ENCODE measurements at regions of chr1 and their contacts with region 1.

Region 1: GRCh38 chr1:24391882-24392603 is 21.5 kb downstream of the STPG1 start:
- DNase-seq: peak in 1 of 2 donors; percentile 94
- H3K4me3 ChIP-seq: no peak overlapping the region
- CTCF ChIP-seq: peak in 1 of 3 donors; percentile 49
- POLR2A ChIP-seq: no peak

Region 2: GRCh38 chr1:23908493-23909341 is 483.3 kb before region 1 on chr1:
- intact Hi-C with region 1: loop called (anchors 5 kb)
- DNase-seq: no peak
- H3K4me3 ChIP-seq: no peak overlapping the region
- CTCF ChIP-seq: no peak
- POLR2A ChIP-seq: no peak

Region 3: GRCh38 chr1:24047101-24047459 is 345.0 kb before region 1 on chr1:
- intact Hi-C with region 1: no loop called
- DNase-seq: peak; percentile 80 to 94
- H3K4me3 ChIP-seq: no peak overlapping the region
- CTCF ChIP-seq: no peak
- POLR2A ChIP-seq: no peak

Region 4: GRCh38 chr1:24201941-24202440 is 190.1 kb before region 1 on chr1:
- intact Hi-C with region 1: loop called (anchors 2 kb)
- DNase-seq: peak; percentile 94 to 97
- H3K4me3 ChIP-seq: no peak overlapping the region
- CTCF ChIP-seq: peak in 1 of 3 donors; percentile 92
- POLR2A ChIP-seq: no peak

Region 5: DNA sequence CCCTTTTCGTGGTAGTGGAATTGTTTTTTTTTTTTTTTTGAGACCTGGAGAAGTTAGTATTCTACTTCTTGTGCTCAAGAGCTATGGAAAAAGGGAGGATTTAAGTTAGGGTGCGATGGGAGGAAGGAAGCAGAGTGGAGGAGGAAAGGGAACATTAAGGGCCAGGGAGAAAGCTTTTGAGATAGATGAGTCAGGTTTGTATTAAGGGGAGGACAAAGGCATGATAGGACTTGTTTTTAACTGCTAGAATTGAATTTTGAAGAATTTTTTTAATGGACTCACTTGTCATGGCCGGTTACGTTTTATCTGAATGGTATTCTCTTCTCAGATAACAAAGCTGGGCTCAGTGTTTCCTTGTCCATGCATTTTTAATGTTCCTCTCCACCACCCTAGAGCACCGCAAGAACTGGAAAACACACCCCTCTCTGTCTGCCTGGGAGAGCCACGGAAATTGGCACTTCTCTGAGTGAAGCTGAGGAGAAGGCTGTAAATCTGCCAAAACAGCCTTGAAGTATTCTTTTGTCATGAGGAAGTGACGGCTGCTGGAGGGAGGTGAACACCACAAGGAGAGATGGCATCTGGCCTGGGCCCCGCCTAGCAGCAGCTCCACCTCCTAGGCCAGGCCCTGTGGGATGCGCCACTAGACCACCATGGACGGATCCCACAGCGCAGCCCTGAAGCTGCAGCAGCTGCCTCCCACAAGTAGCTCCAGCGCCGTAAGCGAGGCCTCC is 27.0 kb after region 1 on chr1:
- intact Hi-C with region 1: no loop called
- DNase-seq: peak in 1 of 2 donors; percentile 54
- H3K4me3 ChIP-seq: no peak overlapping the region
- CTCF ChIP-seq: no peak
- POLR2A ChIP-seq: no peak

Region 6: GRCh38 chr1:24830680-24831272 is 438.7 kb after region 1 on chr1:
- intact Hi-C with region 1: loop called (anchors 10 kb)
- DNase-seq: no peak
- H3K4me3 ChIP-seq: no peak overlapping the region
- CTCF ChIP-seq: peak in 1 of 3 donors; percentile 53
- POLR2A ChIP-seq: no peak